WTC11 (cell line): ENCODE measurements at regions of chr2 and their contacts with region 1.

Region 1: GRCh38 chr2:120520929-120521912 is 175.3 kb downstream of the INHBB start:
- DNase-seq: peak; percentile 84
- ATAC-seq: peak; percentile 83
- H3K4me3 Mint-ChIP-seq: no peak overlapping the region
- H3K27ac Mint-ChIP-seq: no peak overlapping the region
- H3K4me1 Mint-ChIP-seq: peaks cover 19% of the 10 kb centered on the region
- H3K27me3 Mint-ChIP-seq: peaks cover 44% of the 10 kb centered on the region
- CTCF ChIP-seq: peak; percentile 95

Region 2: GRCh38 chr2:120134263-120134662 is 387.0 kb before region 1 on chr2:
- CTCF ChIA-PET with region 1: no interaction called
- POLR2A ChIA-PET with region 1: no interaction called
- DNase-seq: peak; percentile 22
- ATAC-seq: peak; percentile 91
- H3K4me3 Mint-ChIP-seq: no peak overlapping the region
- H3K27ac Mint-ChIP-seq: no peak overlapping the region
- H3K4me1 Mint-ChIP-seq: peaks cover 6% of the 10 kb centered on the region
- H3K27me3 Mint-ChIP-seq: no peaks in the 10 kb centered on the region
- CTCF ChIP-seq: no peak

Region 3: GRCh38 chr2:120305296-120305695 is 215.9 kb before region 1 on chr2:
- CTCF ChIA-PET with region 1: no interaction called
- POLR2A ChIA-PET with region 1: no interaction called
- DNase-seq: no peak
- ATAC-seq: peak; percentile 48; the same call in 1 of the 2 replicates
- H3K4me3 Mint-ChIP-seq: no peak overlapping the region
- H3K27ac Mint-ChIP-seq: no peak overlapping the region
- H3K4me1 Mint-ChIP-seq: peaks cover 3% of the 10 kb centered on the region
- H3K27me3 Mint-ChIP-seq: peaks cover 34% of the 10 kb centered on the region
- CTCF ChIP-seq: no peak

Region 4: GRCh38 chr2:120465989-120466703 is 55.1 kb before region 1 on chr2:
- CTCF ChIA-PET with region 1: interaction called, 15 read pairs
- POLR2A ChIA-PET with region 1: no interaction called
- DNase-seq: peak; percentile 81
- ATAC-seq: peak; percentile 88
- H3K4me3 Mint-ChIP-seq: peak overlapping the region; percentile 53
- H3K27ac Mint-ChIP-seq: no peak overlapping the region
- H3K4me1 Mint-ChIP-seq: peaks cover 15% of the 10 kb centered on the region
- H3K27me3 Mint-ChIP-seq: peaks cover 100% of the 10 kb centered on the region
- CTCF ChIP-seq: no peak

Region 5: DNA sequence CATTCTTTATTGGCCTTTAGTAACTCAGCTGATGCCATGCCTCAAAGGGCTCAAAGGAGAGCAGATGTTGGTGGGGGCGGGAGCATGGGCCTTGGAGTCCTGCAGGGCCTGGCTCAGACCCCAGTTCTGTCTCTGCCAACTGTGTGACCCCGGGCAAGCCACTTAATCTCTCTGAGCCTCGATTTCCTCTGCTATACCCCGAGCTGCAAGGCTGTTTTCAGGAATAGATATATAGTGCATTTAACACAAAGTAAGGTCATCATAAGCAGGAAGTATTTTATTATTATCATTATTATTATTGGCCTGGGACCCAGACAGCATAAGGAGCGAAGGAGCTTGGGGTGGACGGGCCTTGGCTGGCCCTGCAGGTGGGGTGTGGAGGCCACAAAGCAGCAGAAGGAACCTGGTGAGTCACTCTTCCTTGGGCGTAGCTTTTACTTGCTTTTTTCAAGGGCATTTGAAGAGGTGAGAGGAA is 12.6 kb before region 1 on chr2:
- CTCF ChIA-PET with region 1: interaction called, 49 read pairs
- POLR2A ChIA-PET with region 1: no interaction called
- DNase-seq: no peak
- ATAC-seq: no peak
- H3K4me3 Mint-ChIP-seq: no peak overlapping the region
- H3K27ac Mint-ChIP-seq: no peak overlapping the region
- H3K4me1 Mint-ChIP-seq: peaks cover 4% of the 10 kb centered on the region; the same call in 1 of the 2 replicates
- H3K27me3 Mint-ChIP-seq: peaks cover 12% of the 10 kb centered on the region
- CTCF ChIP-seq: no peak

Region 6: DNA sequence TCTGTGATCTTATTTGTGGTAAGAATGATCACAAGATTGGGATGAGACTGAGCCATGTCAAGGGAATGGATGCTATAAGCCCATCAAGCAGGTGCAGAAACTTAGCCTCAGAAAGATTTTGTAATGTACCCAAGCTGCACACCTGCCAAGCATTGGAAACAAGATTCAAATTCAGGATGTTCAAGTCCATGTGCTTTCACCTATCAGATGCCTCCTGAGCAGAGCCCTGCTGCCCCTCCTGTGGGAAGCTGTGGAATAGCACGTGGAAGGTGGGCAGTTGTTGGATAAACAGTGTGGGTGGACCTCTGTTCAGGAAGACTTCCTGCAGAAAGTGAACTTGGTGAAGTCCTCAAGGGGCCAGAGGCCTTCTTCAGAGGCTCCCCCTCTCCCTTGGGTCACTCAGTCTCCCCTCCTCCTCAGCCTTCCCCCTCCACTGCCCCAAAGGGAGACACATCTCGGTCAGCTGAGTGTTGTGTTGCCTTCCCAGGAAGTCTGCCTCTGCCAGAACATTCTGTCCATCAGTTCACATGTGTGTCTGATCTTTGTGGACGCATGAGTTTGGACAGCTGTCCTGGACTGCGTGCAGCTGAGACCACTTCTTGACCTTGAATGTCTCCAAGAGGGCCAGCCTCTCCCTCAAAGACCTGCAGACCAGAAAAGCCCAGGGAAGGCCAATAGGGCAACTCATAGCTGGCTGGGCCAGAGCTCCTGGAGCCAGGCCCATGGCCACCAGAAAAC is 10.8 kb after region 1 on chr2:
- CTCF ChIA-PET with region 1: interaction called, 13 read pairs
- POLR2A ChIA-PET with region 1: no interaction called
- DNase-seq: no peak
- ATAC-seq: no peak
- H3K4me3 Mint-ChIP-seq: no peak overlapping the region
- H3K27ac Mint-ChIP-seq: no peak overlapping the region
- H3K4me1 Mint-ChIP-seq: no peaks in the 10 kb centered on the region
- H3K27me3 Mint-ChIP-seq: peaks cover 33% of the 10 kb centered on the region
- CTCF ChIP-seq: no peak

Region 7: GRCh38 chr2:120740765-120741524 is 219.7 kb after region 1 on chr2:
- CTCF ChIA-PET with region 1: no interaction called
- POLR2A ChIA-PET with region 1: no interaction called
- DNase-seq: peak; percentile 71
- ATAC-seq: peak; percentile 50
- H3K4me3 Mint-ChIP-seq: peak overlapping the region; percentile 65
- H3K27ac Mint-ChIP-seq: peak overlapping the region; percentile 97
- H3K4me1 Mint-ChIP-seq: peaks cover 68% of the 10 kb centered on the region
- H3K27me3 Mint-ChIP-seq: no peaks in the 10 kb centered on the region
- CTCF ChIP-seq: no peak

Region 8: GRCh38 chr2:121004950-121005349 is 483.7 kb after region 1 on chr2:
- CTCF ChIA-PET with region 1: no interaction called
- POLR2A ChIA-PET with region 1: no interaction called
- DNase-seq: no peak
- ATAC-seq: no peak
- H3K4me3 Mint-ChIP-seq: no peak overlapping the region
- H3K27ac Mint-ChIP-seq: 0 out of 2 replicates have a peak overlapping the region, but pooled peaks have one; percentile 12
- H3K4me1 Mint-ChIP-seq: peaks cover 22% of the 10 kb centered on the region
- H3K27me3 Mint-ChIP-seq: peaks cover 72% of the 10 kb centered on the region
- CTCF ChIP-seq: no peak